CD4-positive, alpha-beta memory T cell (primary cell): ENCODE measurements at regions of chr14 and their contacts with region 1.

Region 1: GRCh38 chr14:64478634-64479250 is 13.4 kb downstream of the AKAP5 start:
- DNase-seq: peak in 4 of 5 donors; percentile 27 to 37 (median 32)
- H3K4me3 ChIP-seq: no peak overlapping the region
- H3K4me3 Mint-ChIP-seq: no peak overlapping the region
- H3K27ac ChIP-seq: no peak overlapping the region
- H3K27ac Mint-ChIP-seq: peak overlapping the region in 1 of 7 donors; percentile 55
- H3K4me1 ChIP-seq: no peaks in the 10 kb centered on the region
- H3K4me1 Mint-ChIP-seq: peaks cover 7 to 17% (median 16%) of the 10 kb centered on the region in 4 donors
- H3K27me3 ChIP-seq: no peaks in the 10 kb centered on the region
- H3K27me3 Mint-ChIP-seq: no peaks in the 10 kb centered on the region

Region 2: DNA sequence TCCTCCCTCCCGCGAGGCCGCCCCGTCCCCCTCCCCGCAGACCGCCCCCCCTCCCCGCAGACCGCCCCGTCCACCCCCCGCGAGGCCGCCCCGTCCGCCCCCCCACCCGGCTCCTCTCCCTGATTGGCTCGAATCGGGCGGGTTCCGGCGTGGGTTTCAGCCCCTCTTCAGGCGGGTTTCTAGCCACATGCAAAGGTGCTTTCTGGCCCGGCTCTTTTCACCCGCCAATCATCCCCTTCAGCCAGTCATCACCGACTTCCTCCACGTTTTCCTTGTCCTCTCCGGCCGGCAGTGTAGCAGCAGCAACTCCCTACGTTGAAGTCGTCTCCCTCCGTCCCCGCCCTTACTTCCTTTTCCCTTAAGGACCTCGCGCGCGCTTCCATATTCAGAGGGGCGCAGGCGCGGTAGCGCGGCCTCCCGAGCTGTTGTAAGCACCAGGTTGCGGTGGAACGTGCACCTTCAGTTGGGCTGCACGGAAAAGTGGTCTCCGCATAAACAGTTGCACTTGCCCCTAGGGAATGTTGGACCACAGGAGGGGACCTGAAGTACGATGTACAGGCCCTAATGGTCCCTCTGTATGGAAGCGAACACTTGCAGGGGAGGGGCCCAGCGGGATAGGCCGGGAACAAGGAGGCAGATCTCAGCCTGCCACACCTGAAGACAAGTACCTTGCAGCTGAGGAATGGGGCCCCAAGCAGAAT is 140.0 kb before region 1 on chr14:
- CTCF ChIA-PET with region 1: interaction called, 32 read pairs
- POLR2A ChIA-PET with region 1: no interaction called
- intact Hi-C with region 1: no loop called
- DNase-seq: peak; percentile 84 to 91 (median 85)
- H3K4me3 ChIP-seq: peak overlapping the region; percentile 36 to 77
- H3K4me3 Mint-ChIP-seq: peak overlapping the region; percentile 93 to 99 (median 95)
- H3K27ac ChIP-seq: peak overlapping the region; percentile 34
- H3K27ac Mint-ChIP-seq: peak overlapping the region; percentile 83 to 97 (median 95)
- H3K4me1 ChIP-seq: peaks cover 17% of the 10 kb centered on the region
- H3K4me1 Mint-ChIP-seq: peaks cover 12 to 27% (median 21%) of the 10 kb centered on the region in 4 donors
- H3K27me3 ChIP-seq: no peaks in the 10 kb centered on the region
- H3K27me3 Mint-ChIP-seq: no peaks in the 10 kb centered on the region

Region 3: GRCh38 chr14:64465191-64465822 is 13.4 kb before region 1 on chr14 and contains the start of gene AKAP5:
- CTCF ChIA-PET with region 1: interaction called, 17 read pairs
- POLR2A ChIA-PET with region 1: no interaction called
- intact Hi-C with region 1: loop called (anchors 1 kb)
- DNase-seq: peak; percentile 62 to 72 (median 64)
- H3K4me3 ChIP-seq: peak within 1 kb of the TSS; percentile 38 to 57
- H3K4me3 Mint-ChIP-seq: peak within 1 kb of the TSS; percentile 82 to 95 (median 90)
- H3K27ac ChIP-seq: peak within 1 kb of the TSS; percentile 29
- H3K27ac Mint-ChIP-seq: peak within 1 kb of the TSS; percentile 71 to 89 (median 78)
- H3K4me1 ChIP-seq: peaks cover 36% of the 10 kb centered on the region
- H3K4me1 Mint-ChIP-seq: peaks cover 25 to 45% (median 33%) of the 10 kb centered on the region in 4 donors
- H3K27me3 ChIP-seq: no peaks in the 10 kb centered on the region
- H3K27me3 Mint-ChIP-seq: no peaks in the 10 kb centered on the region
- total RNA-seq, gene AKAP5: 0.14 to 0.20 TPM

Region 4: GRCh38 chr14:64496764-64497163 is 18.0 kb after region 1 on chr14:
- CTCF ChIA-PET with region 1: interaction called, 28 read pairs
- POLR2A ChIA-PET with region 1: interaction called, 318 read pairs
- intact Hi-C with region 1: no loop called
- DNase-seq: no peak
- H3K4me3 ChIP-seq: no peak overlapping the region
- H3K4me3 Mint-ChIP-seq: peak overlapping the region in 6 of 8 donors; percentile 35 to 76 (median 62)
- H3K27ac ChIP-seq: no peak overlapping the region
- H3K27ac Mint-ChIP-seq: peak overlapping the region; percentile 43 to 85 (median 78)
- H3K4me1 ChIP-seq: peaks cover 81% of the 10 kb centered on the region
- H3K4me1 Mint-ChIP-seq: peaks cover 42 to 85% (median 59%) of the 10 kb centered on the region in 4 donors
- H3K27me3 ChIP-seq: no peaks in the 10 kb centered on the region
- H3K27me3 Mint-ChIP-seq: no peaks in the 10 kb centered on the region

Region 5: GRCh38 chr14:64510825-64511671 is 32.3 kb after region 1 on chr14:
- CTCF ChIA-PET with region 1: interaction called, 32 read pairs
- POLR2A ChIA-PET with region 1: interaction called, 318 read pairs
- intact Hi-C with region 1: loop called (anchors 1 kb)
- DNase-seq: peak; percentile 65 to 72 (median 69)
- H3K4me3 ChIP-seq: no peak overlapping the region
- H3K4me3 Mint-ChIP-seq: peak overlapping the region in 7 of 8 donors; percentile 12 to 93 (median 65)
- H3K27ac ChIP-seq: peak overlapping the region; percentile 59
- H3K27ac Mint-ChIP-seq: peak overlapping the region; percentile 54 to 94 (median 88)
- H3K4me1 ChIP-seq: peaks cover 92% of the 10 kb centered on the region
- H3K4me1 Mint-ChIP-seq: peaks cover 62 to 93% (median 81%) of the 10 kb centered on the region in 4 donors
- H3K27me3 ChIP-seq: no peaks in the 10 kb centered on the region
- H3K27me3 Mint-ChIP-seq: no peaks in the 10 kb centered on the region

Region 6: GRCh38 chr14:64681796-64682710 is 203.3 kb after region 1 on chr14:
- CTCF ChIA-PET with region 1: no interaction called
- POLR2A ChIA-PET with region 1: no interaction called
- intact Hi-C with region 1: no loop called
- DNase-seq: no peak
- H3K4me3 ChIP-seq: no peak overlapping the region
- H3K4me3 Mint-ChIP-seq: no peak overlapping the region
- H3K27ac ChIP-seq: no peak overlapping the region
- H3K27ac Mint-ChIP-seq: no peak overlapping the region
- H3K4me1 ChIP-seq: no peaks in the 10 kb centered on the region
- H3K4me1 Mint-ChIP-seq: peaks cover 10 to 27% (median 18%) of the 10 kb centered on the region in 4 donors
- H3K27me3 ChIP-seq: no peaks in the 10 kb centered on the region
- H3K27me3 Mint-ChIP-seq: no peaks in the 10 kb centered on the region

Region 7: GRCh38 chr14:64812217-64812811 is 333.6 kb after region 1 on chr14:
- CTCF ChIA-PET with region 1: no interaction called
- POLR2A ChIA-PET with region 1: no interaction called
- intact Hi-C with region 1: no loop called
- DNase-seq: peak; percentile 32 to 78 (median 48)
- H3K4me3 ChIP-seq: no peak overlapping the region
- H3K4me3 Mint-ChIP-seq: no peak overlapping the region
- H3K27ac ChIP-seq: no peak overlapping the region
- H3K27ac Mint-ChIP-seq: peak overlapping the region in 2 of 7 donors; percentile 74 to 81
- H3K4me1 ChIP-seq: peaks cover 4% of the 10 kb centered on the region
- H3K4me1 Mint-ChIP-seq: peaks cover 3 to 6% (median 5%) of the 10 kb centered on the region in 4 donors
- H3K27me3 ChIP-seq: no peaks in the 10 kb centered on the region
- H3K27me3 Mint-ChIP-seq: peaks cover 8 to 11% of the 10 kb centered on the region in 2 donors